Tibial artery (tissue), 4 donors: ENCODE measurements at regions of chr12 and their contacts with region 1.

Region 1: DNA sequence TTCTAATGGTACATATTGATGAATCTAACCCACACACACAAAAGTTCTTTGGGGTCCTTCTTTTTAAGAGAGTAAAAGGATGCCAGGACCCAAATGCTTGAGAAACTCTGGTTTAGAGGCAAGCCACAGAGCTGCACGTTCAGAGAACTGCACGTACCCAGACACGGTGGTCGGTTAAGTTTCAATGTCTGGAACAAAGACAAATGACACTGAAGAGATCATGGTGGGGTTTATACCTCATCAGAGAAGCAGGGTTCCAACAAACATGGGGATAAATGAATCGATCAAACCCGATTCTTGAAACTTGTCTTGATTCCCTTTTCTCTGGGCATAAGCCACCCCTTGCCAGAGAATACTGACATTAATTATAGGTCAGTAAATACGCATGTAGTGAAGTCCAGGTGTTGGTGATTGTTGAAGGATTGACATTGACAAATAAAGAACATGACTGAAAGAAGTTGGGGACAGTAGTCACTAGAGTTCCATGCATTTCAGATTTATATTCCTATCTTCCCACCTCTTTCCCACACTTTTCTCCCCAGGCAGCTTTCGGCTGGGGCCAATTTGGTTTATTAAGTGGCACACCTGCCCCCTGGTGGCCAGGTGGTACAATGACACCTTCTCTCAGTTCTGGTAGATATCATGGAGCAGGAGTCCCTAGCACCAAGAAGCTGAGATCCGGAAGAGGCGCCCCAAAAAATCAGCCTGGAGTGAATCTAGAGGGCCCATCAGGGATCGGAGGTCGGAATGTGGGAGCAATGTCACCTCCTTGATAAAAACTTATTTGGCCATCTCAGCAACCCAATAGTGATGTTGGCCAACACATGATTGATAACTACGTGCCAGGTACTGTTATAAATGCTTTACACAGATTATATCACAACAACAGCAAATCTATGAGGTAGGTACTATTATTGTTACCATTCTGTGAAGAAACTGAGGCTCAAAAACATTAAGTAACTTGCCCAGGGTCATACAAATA is 17.8 kb upstream of the HDAC7 start:
- DNase-seq: peak; percentile 73 to 87
- H3K4me3 ChIP-seq: no peak overlapping the region
- H3K27ac ChIP-seq: peak overlapping the region in 1 of 2 donors; percentile 12
- H3K4me1 ChIP-seq: peaks cover 0 to 13% (median 3%) of the 10 kb centered on the region in 4 donors
- H3K27me3 ChIP-seq: no peaks in the 10 kb centered on the region
- CTCF ChIP-seq: peak; percentile 85 to 96

Region 2: GRCh38 chr12:47715393-47715876 is 122.0 kb before region 1 on chr12:
- intact Hi-C with region 1: loop called (anchors 5 kb)
- DNase-seq: peak; percentile 66 to 87
- H3K4me3 ChIP-seq: peak overlapping the region in 1 of 2 donors; percentile 17
- H3K27ac ChIP-seq: peak overlapping the region; percentile 79 to 93
- H3K4me1 ChIP-seq: peaks cover 5 to 39% (median 33%) of the 10 kb centered on the region in 4 donors
- H3K27me3 ChIP-seq: no peaks in the 10 kb centered on the region
- CTCF ChIP-seq: peak; percentile 72 to 93

Region 3: DNA sequence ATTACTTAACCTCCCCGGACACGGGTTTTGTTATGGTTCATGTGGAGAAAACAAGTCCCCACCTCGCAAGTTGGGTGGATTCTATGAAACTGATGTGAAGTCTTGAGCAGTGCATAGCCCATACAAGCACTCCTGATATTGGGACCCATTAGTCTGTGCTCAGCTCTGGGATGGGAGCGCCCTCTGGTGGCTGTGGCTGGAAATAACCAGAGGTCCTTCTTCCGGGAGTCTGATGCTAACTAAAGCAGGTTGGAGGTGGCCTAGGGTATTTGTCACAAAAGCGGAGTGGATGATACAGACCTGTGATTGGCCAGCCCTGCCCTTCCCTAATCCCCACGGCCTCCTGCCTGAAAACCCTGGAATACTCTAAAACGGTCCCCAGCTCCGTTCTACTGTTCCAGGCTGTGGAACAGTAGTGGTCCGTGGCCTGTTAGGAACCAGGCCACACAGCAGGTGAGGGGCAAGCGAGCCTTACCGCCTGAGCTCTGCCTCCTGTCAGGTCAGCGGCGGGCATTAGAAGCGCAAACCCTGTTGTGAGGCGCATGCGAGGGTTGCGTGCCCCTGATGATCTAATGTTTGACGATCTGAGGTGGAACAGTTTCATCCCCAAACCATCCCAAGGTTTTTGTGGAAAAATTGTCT is 58.1 kb before region 1 on chr12:
- intact Hi-C with region 1: loop called (anchors 2 kb)
- DNase-seq: peak; percentile 92 to 93
- H3K4me3 ChIP-seq: no peak overlapping the region
- H3K27ac ChIP-seq: peak overlapping the region; percentile 38 to 87
- H3K4me1 ChIP-seq: peaks cover 0 to 55% (median 53%) of the 10 kb centered on the region in 4 donors
- H3K27me3 ChIP-seq: no peaks in the 10 kb centered on the region
- CTCF ChIP-seq: peak; percentile 92 to 96

Region 4: DNA sequence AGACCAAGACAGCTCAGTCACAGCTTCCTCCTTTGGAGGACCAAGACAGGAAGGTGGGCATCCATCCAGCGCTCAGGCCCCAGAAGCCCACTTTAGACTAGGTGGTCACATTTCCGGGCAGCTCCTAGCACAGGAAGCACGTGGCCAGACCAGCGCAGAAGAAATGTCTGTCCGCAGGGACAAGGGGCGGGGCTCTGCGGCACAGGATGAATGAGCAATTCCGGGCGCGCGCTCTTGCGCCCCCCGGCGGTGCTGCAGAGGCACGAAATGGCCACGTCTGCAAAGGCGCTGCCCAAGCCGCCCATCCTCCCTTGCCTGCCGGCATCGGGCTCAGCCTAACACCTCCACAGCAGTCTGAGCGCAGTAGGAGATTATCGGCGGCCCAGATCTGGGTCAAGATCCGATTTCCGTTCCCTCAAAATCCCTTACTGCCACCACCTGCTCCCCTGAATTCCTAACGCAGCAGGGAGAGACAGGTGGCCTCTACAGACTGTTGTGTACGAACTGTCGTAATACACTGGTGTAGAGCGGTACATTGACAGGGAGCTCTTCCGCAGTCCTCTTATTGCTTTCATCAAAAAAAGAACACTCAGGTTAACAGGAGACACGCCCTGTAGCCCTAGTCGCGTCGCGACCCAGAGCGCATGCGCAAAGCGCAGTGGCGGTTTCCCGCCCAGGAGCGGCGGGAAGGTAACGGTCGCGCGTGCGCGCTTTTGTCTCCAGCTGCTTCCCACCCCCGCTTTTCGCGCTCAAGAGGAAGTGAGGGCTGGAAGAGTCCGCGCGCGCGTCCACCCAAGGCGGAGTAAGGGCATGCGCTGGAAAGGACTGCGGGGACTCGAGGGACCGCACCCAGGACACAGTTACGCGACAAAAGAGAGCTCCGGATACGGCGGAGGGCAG is 1292.9 kb after region 1 on chr12:
- intact Hi-C with region 1: loop called (anchors 5 kb)
- DNase-seq: peak; percentile 94 to 97
- H3K4me3 ChIP-seq: peak overlapping the region; percentile 75 to 100
- H3K27ac ChIP-seq: peak overlapping the region; percentile 97 to 100
- H3K4me1 ChIP-seq: peaks cover 0 to 37% (median 20%) of the 10 kb centered on the region in 4 donors
- H3K27me3 ChIP-seq: no peaks in the 10 kb centered on the region
- CTCF ChIP-seq: peak; percentile 90 to 92